ENCODE measurements at regions of chr20 and their contacts with region 1.

Region 1: GRCh38 chr20:12925214-12925755 is 83.5 kb upstream of the SPTLC3 start:
- DNase-seq: peak; percentile 66
- H3K4me3 ChIP-seq: peak overlapping the region in 1 of 2 experiments; percentile 37; a peak in 1 of 4 replicates
- H3K27ac ChIP-seq: no peak overlapping the region
- H3K4me1 ChIP-seq: peaks cover 0 to 10% of the 10 kb centered on the region in 2 experiments; a peak in 2 of 4 replicates
- H3K27me3 ChIP-seq: no peaks in the 10 kb centered on the region
- CTCF ChIP-seq: peak; percentile 49
- EP300 ChIP-seq: no peak
- RAD21 ChIP-seq: peak; percentile 91

Region 2: DNA sequence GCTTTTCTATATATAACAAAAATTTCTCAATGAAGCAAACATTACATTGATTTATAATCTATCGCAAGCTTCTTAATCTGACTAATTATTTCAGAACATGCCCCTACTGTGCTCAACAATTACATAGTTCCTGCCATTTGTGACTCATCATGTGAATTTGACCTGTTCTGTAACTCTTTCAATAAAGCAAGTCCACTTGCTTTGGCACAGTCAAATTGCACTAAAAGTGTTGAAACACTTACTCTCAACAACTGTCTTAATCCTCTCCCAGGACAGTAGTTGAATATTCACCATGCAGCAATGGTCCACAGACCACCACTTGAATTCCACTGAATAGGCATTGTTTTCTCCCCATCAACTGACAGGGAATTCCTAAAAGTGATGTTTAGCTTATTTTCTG is 15.7 kb after region 1 on chr20:
- CTCF ChIA-PET with region 1: interaction called, 12 read pairs
- POLR2A ChIA-PET with region 1: no interaction called
- DNase-seq: no peak
- H3K4me3 ChIP-seq: no peak overlapping the region
- H3K27ac ChIP-seq: no peak overlapping the region
- H3K4me1 ChIP-seq: no peaks in the 10 kb centered on the region
- H3K27me3 ChIP-seq: no peaks in the 10 kb centered on the region
- CTCF ChIP-seq: no peak
- EP300 ChIP-seq: no peak
- RAD21 ChIP-seq: no peak

Region 3: DNA sequence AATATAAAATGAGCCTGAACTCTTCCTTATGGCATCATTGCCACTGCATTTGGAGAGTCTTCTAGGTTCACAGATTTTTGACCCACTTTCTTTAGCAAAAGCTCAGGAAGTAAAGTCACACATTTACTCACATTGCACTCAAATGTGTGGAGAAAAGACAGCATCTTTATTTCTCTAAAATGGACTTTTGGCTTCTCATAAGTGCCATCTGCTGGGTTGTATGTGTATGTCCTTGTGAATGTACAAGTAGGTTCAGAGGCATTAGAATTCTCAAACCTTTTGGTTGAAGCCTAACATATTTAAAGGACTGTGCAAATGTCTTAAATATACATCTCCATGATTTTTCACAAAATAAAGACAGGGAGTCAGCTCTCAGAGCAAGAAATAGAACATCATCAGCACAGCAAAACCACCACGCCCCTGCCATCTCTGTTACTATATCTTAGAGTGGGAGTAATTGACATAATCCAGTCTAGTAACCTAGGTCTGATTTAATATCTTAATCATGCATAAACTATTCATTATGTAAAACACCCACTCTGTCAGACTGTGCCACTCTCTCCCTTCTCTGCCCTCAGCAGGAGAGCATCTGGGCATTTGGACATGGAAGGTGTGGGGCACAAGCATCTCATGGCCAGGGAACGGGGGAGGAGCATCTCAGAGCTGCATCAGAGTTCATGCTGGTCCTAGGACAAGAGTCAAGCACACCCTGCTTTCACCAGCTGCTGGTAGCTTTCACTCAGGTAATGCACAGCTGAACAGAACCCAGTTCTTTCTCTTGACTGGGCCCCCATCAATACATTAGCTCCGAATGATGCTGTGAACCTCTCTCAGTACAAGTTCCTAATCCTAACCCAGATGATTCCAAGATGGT is 41.4 kb after region 1 on chr20:
- CTCF ChIA-PET with region 1: interaction called, 47 read pairs
- POLR2A ChIA-PET with region 1: no interaction called
- DNase-seq: no peak
- H3K4me3 ChIP-seq: no peak overlapping the region
- H3K27ac ChIP-seq: no peak overlapping the region
- H3K4me1 ChIP-seq: no peaks in the 10 kb centered on the region
- H3K27me3 ChIP-seq: no peaks in the 10 kb centered on the region
- CTCF ChIP-seq: no peak
- EP300 ChIP-seq: no peak
- RAD21 ChIP-seq: peak; percentile 51

Region 4: DNA sequence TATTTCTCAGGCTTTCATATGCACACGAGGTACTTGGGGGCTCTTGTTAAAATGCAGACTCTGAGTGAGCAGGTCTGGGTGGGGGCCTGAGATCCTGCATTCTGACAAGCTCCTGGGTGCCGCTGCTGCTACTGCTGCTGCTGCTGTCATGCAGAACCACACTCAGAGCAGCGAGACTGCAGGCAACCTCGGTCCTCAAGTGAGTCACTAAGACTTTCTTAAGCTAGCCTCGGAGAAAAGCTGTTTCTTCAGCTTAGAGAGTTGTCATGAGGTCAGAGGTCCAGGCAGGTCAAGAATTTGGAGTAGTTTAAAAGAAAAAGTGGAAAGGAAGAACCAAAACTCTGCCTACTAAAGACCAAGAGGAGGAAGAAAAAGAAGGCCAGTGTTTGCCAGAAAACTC is 176.4 kb after region 1 on chr20:
- CTCF ChIA-PET with region 1: interaction called, 24 read pairs
- POLR2A ChIA-PET with region 1: no interaction called
- DNase-seq: no peak
- H3K4me3 ChIP-seq: no peak overlapping the region
- H3K27ac ChIP-seq: no peak overlapping the region
- H3K4me1 ChIP-seq: no peaks in the 10 kb centered on the region
- H3K27me3 ChIP-seq: no peaks in the 10 kb centered on the region
- CTCF ChIP-seq: no peak
- EP300 ChIP-seq: no peak
- RAD21 ChIP-seq: no peak